ENCODE measurements at regions of chr6 and their contacts with region 1.

Region 1: GRCh38 chr6:32984605-32985389 is 16.4 kb downstream of the BRD2 start:
- DNase-seq: peak; percentile 70 to 95 (median 88)
- ATAC-seq: peak; percentile 76 to 88 (median 86)
- H3K4me3 ChIP-seq: no peak overlapping the region
- H3K4me3 Mint-ChIP-seq: no peak overlapping the region
- H3K27ac ChIP-seq: no peak overlapping the region
- H3K27ac Mint-ChIP-seq: peak overlapping the region; percentile 50 to 83
- H3K4me1 ChIP-seq: peaks cover 0 to 9% of the 10 kb centered on the region in 2 experiments
- H3K4me1 Mint-ChIP-seq: peaks cover 23 to 35% (median 26%) of the 10 kb centered on the region in 3 donors
- H3K27me3 ChIP-seq: no peaks in the 10 kb centered on the region
- H3K27me3 Mint-ChIP-seq: no peaks in the 10 kb centered on the region

Region 2: GRCh38 chr6:31053873-31054272 is 1930.9 kb before region 1 on chr6:
- CTCF ChIA-PET with region 1: no interaction called
- POLR2A ChIA-PET with region 1: no interaction called
- DNase-seq: no peak
- ATAC-seq: no peak
- H3K4me3 ChIP-seq: no peak overlapping the region
- H3K4me3 Mint-ChIP-seq: no peak overlapping the region
- H3K27ac ChIP-seq: no peak overlapping the region
- H3K27ac Mint-ChIP-seq: no peak overlapping the region
- H3K4me1 ChIP-seq: no peaks in the 10 kb centered on the region
- H3K4me1 Mint-ChIP-seq: no peaks in the 10 kb centered on the region
- H3K27me3 ChIP-seq: peaks cover 0 to 16% of the 10 kb centered on the region in 2 experiments
- H3K27me3 Mint-ChIP-seq: peaks cover 10 to 37% of the 10 kb centered on the region in 2 donors

Region 3: DNA sequence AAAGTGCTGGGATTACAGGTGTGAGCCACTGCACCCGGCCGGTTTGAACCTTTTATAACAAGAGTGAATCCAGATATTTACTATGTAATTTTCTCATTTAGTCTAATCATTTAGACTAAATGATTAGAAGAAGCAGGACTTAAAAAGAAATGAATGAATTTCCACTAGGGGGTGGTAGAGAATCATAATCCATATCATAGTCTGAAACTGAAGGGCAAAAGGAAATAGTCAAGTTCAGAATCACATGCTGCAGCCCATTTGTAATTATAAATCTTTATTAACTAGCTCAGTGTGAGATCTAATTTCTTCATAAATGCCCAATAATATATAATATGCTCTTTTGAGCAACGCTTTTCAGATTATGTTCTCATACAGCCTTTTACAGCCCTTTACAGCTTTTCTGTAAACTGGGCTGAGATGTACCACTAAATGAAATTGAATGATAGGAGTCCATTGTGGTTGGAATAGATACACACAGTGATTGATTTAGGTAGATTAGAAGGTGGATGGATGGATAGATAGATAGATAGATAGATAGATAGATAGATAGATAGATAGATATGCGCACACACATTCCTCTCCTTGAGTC is 99.0 kb before region 1 on chr6:
- CTCF ChIA-PET with region 1: interaction called, 13 to 41 read pairs
- POLR2A ChIA-PET with region 1: interaction called, 4 to 5 read pairs
- DNase-seq: peak in 1 of 35 experiments; percentile 86
- ATAC-seq: peak; percentile 34 to 70 (median 64)
- H3K4me3 ChIP-seq: no peak overlapping the region
- H3K4me3 Mint-ChIP-seq: no peak overlapping the region
- H3K27ac ChIP-seq: no peak overlapping the region
- H3K27ac Mint-ChIP-seq: no peak overlapping the region
- H3K4me1 ChIP-seq: no peaks in the 10 kb centered on the region
- H3K4me1 Mint-ChIP-seq: peaks cover 0 to 4% (median 0%) of the 10 kb centered on the region in 3 donors
- H3K27me3 ChIP-seq: no peaks in the 10 kb centered on the region
- H3K27me3 Mint-ChIP-seq: no peaks in the 10 kb centered on the region

Region 4: GRCh38 chr6:32940656-32941213 is 44.1 kb before region 1 on chr6 and contains the start of gene HLA-DMB:
- CTCF ChIA-PET with region 1: interaction called in 1 of 2 experiments, 124 read pairs
- POLR2A ChIA-PET with region 1: interaction called, 3 to 4 read pairs
- DNase-seq: peak in 33 of 35 experiments; percentile 19 to 89 (median 42)
- ATAC-seq: peak; percentile 85 to 90 (median 87)
- H3K4me3 ChIP-seq: peak within 1 kb of the TSS; percentile 69 to 94
- H3K4me3 Mint-ChIP-seq: peak within 1 kb of the TSS; percentile 76 to 90 (median 88)
- H3K27ac ChIP-seq: peak within 1 kb of the TSS; percentile 93
- H3K27ac Mint-ChIP-seq: peak within 1 kb of the TSS; percentile 97 to 98
- H3K4me1 ChIP-seq: peaks cover 52 to 60% of the 10 kb centered on the region in 2 experiments
- H3K4me1 Mint-ChIP-seq: peaks cover 57 to 72% (median 59%) of the 10 kb centered on the region in 3 donors
- H3K27me3 ChIP-seq: no peaks in the 10 kb centered on the region
- H3K27me3 Mint-ChIP-seq: no peaks in the 10 kb centered on the region
- total RNA-seq, gene HLA-DMB: 8.8 to 30.6 (median 10.6) TPM

Region 5: GRCh38 chr6:32952817-32953739 is 31.7 kb before region 1 on chr6 and contains the start of gene HLA-DMA:
- CTCF ChIA-PET with region 1: interaction called, 14 to 56 read pairs
- POLR2A ChIA-PET with region 1: no interaction called
- DNase-seq: peak; percentile 57 to 89 (median 73)
- ATAC-seq: peak; percentile 97 to 99 (median 98)
- H3K4me3 ChIP-seq: peak within 1 kb of the TSS; percentile 38 to 65
- H3K4me3 Mint-ChIP-seq: peak within 1 kb of the TSS; percentile 66 to 82 (median 82)
- H3K27ac ChIP-seq: peak within 1 kb of the TSS; percentile 35
- H3K27ac Mint-ChIP-seq: peak within 1 kb of the TSS; percentile 83 to 91
- H3K4me1 ChIP-seq: peaks cover 9 to 41% of the 10 kb centered on the region in 2 experiments
- H3K4me1 Mint-ChIP-seq: peaks cover 41 to 59% (median 43%) of the 10 kb centered on the region in 3 donors
- H3K27me3 ChIP-seq: no peaks in the 10 kb centered on the region
- H3K27me3 Mint-ChIP-seq: no peaks in the 10 kb centered on the region
- total RNA-seq, gene HLA-DMA: 22.3 to 37.8 (median 27.5) TPM